Activated CD4-positive, alpha-beta T cell treated with anti-CD3 and anti-CD28 coated beads, Interleukin-2, amount 10 ng/mL, durations not matched to agents 24 days and 14 days (primary cell): ENCODE measurements at regions of chr12 and their contacts with region 1.

Region 1: DNA sequence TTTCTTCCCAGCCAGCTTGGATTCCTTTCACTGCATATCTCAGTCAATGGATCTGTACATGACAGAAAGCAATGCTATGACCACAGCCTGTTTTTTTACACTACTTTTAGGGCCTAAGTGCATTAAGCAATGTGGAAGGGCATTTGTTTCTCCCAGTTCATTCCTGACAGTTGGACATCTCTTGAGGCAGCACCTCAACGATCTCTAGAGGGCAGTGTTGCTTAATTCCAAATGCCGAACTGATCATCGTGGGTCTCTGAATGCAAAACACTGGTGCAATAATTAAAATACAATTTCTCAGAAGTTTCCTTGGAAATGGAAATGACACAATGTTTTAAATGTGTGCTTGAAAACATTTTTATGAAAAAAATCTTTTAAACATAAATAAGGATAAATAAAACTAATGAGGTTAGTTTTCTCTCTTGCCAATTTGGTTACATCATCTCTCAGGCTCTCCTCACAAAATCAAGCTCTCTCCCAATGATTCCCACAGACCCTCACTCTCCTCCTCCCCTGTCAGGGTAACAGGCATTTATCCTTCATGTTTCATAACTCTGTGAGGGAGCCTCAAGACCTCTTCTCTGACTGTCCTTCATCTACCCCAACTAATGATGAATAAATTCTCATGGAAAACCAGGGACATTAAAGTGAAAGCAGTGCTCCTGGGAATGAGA is 192.4 kb upstream of the SLC16A7 start:
- DNase-seq: peak; percentile 80
- H3K4me3 Mint-ChIP-seq: no peak overlapping the region
- H3K27ac Mint-ChIP-seq: no peak overlapping the region
- H3K4me1 Mint-ChIP-seq: peaks cover 9% of the 10 kb centered on the region
- H3K27me3 Mint-ChIP-seq: peaks cover 3% of the 10 kb centered on the region

Region 2: DNA sequence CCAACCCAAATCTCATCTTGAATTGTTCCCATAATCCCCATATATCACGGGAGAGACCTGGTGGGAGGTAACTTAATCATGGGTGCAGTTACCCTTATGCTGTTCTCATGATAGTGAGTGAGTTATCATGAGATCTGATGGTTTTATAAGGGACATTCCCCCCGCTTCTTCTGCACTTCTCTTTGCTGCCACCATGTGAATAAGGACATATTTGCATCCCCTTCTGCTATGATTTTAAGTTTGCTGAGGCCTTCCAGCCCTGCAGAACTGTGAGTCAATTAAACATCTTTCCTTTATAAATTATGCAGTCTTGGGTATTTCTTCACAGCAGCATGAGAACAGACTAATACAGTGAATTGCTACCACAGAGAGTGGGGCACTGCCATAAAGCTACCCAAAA is 662.2 kb before region 1 on chr12:
- intact Hi-C with region 1: no loop called
- DNase-seq: no peak
- H3K4me3 Mint-ChIP-seq: no peak overlapping the region
- H3K27ac Mint-ChIP-seq: no peak overlapping the region
- H3K4me1 Mint-ChIP-seq: no peaks in the 10 kb centered on the region
- H3K27me3 Mint-ChIP-seq: no peaks in the 10 kb centered on the region

Region 3: GRCh38 chr12:59317598-59317997 is 85.8 kb before region 1 on chr12:
- intact Hi-C with region 1: no loop called
- DNase-seq: no peak
- H3K4me3 Mint-ChIP-seq: no peak overlapping the region
- H3K27ac Mint-ChIP-seq: no peak overlapping the region
- H3K4me1 Mint-ChIP-seq: no peaks in the 10 kb centered on the region
- H3K27me3 Mint-ChIP-seq: no peaks in the 10 kb centered on the region

Region 4: GRCh38 chr12:59499774-59500173 is 96.4 kb after region 1 on chr12:
- intact Hi-C with region 1: no loop called
- DNase-seq: no peak
- H3K4me3 Mint-ChIP-seq: no peak overlapping the region
- H3K27ac Mint-ChIP-seq: no peak overlapping the region
- H3K4me1 Mint-ChIP-seq: peaks cover 5% of the 10 kb centered on the region
- H3K27me3 Mint-ChIP-seq: no peaks in the 10 kb centered on the region

Region 5: GRCh38 chr12:59548930-59549329 is 145.5 kb after region 1 on chr12:
- intact Hi-C with region 1: no loop called
- DNase-seq: peak; percentile 66
- H3K4me3 Mint-ChIP-seq: no peak overlapping the region
- H3K27ac Mint-ChIP-seq: no peak overlapping the region
- H3K4me1 Mint-ChIP-seq: peaks cover 3% of the 10 kb centered on the region
- H3K27me3 Mint-ChIP-seq: peaks cover 2% of the 10 kb centered on the region

Region 6: DNA sequence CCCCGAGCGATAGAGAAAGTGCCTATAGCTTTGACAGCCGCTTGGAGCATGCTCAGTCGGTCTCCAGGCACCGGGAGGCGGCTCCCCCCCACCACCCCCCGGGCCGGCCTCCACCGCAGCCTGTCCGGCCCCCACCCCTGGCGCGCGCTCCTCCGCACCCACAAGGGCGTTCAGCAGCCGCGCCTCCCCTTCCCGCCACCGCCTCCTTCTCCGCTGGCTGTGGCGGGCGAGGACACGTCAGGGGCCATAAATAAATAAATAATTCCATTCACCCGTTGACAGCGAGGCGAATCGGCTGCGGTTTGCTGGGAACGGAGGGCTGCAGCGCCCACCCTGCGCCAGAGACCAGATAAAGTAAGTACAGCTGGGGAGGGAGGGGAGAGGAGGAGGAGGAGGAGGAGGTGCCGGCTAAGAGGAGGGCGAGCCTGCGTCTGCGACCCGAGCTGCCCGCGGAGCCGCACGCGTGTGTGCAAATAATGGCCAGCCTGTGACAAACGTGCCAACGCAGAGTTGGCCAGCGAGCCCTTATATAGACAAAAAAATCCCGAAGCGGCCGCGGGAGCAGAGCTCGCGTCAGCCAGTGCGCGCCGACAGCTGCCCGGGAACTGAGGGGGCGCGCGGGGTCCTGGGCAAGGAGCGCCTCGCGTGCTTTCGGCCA is 192.6 kb after region 1 on chr12 and contains the start of gene SLC16A7:
- intact Hi-C with region 1: loop called (anchors 2 kb)
- DNase-seq: peak; percentile 93
- H3K4me3 Mint-ChIP-seq: peak within 1 kb of the TSS; percentile 88
- H3K27ac Mint-ChIP-seq: peak within 1 kb of the TSS; percentile 100
- H3K4me1 Mint-ChIP-seq: peaks cover 42% of the 10 kb centered on the region
- H3K27me3 Mint-ChIP-seq: no peaks in the 10 kb centered on the region
- total RNA-seq, gene SLC16A7: 43.7 and 44.2 TPM in 2 replicates

Region 7: DNA sequence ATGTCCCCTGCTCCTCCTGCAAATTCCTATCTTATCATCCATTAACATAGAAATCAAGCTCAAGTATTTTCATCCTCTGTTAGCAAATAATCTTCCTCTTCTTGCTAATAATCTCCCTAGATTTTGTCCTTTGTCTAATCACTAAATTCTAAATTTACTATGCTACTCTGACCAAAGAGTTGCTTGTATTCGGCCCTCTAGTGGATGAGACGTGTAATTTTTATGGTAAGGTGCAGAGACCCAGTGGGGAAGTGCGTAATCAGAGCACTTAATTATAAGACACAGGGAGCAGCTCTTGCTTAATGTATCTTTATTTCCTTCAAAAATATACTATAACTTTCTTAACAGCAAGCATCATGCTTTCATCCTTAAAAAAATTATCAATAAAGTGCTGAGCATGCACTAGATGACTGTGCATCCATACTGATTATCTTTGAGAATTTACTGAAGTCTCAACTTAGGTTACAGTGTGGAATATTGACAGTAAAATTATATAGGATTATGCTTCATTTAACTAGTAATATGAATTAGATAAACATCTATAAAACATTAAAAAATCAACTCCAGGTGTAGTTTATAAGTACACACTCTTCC is 405.0 kb after region 1 on chr12:
- intact Hi-C with region 1: loop called (anchors 1 kb)
- DNase-seq: peak; percentile 66
- H3K4me3 Mint-ChIP-seq: no peak overlapping the region
- H3K27ac Mint-ChIP-seq: no peak overlapping the region
- H3K4me1 Mint-ChIP-seq: no peaks in the 10 kb centered on the region
- H3K27me3 Mint-ChIP-seq: peaks cover 6% of the 10 kb centered on the region

Region 8: DNA sequence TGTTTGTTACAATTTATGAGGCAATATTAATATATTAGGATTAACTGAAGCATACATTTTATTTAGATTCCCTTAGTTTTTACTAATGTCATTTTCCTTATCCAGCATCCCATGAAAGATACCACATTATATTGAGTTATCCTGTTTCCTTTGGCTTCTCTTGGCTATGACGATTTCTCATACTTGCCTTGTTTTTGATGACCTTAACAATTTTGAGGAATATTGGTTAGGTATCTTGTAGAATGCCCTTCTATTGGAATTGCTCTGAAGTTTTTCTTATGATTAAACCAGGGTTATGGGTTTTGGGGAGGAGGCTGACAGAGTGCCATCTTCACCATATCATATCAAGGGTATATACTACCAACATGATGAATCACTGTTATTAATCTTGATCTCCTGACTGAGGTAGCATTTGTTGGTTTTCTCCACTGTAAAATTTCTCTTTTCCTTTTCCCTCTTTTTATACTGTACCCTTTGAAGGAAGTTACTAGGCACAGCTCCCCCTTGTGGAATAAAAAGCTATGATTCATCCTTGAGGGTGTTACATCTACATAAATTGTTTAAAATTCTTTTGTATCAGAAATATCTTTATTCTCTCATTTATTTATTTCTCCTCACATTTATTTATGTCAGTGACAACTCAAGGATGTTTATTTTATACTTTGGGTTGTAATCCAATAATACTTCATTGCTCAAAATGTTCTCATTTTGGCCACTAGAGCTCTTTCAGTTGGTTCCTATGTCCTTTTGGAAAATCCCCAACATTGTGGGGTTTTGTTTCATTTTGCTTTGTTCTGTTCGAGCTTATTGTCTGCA is 431.5 kb after region 1 on chr12:
- intact Hi-C with region 1: loop called (anchors 1 kb)
- DNase-seq: peak; percentile 61
- H3K4me3 Mint-ChIP-seq: no peak overlapping the region
- H3K27ac Mint-ChIP-seq: no peak overlapping the region
- H3K4me1 Mint-ChIP-seq: no peaks in the 10 kb centered on the region
- H3K27me3 Mint-ChIP-seq: peaks cover 2% of the 10 kb centered on the region

Region 9: DNA sequence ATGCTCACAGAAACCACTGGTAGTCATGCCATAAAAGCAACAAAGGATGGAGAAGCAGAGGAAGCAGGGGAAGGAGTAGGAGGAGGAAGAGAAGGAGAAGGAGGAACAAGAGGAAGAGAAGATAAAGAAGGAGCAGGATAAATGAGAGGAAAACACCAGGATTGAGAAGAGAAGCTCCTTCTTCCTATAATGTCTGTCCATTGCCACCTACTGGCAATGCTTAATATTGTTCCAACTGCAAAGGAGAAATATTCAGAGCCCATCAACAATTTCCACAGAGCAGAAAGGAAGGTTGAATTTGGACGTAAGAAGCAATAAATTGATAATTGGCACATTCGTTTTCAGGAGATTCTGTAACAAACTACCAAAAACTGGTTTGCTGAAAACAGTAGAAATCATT is 1090.8 kb after region 1 on chr12:
- intact Hi-C with region 1: loop called (anchors 10 kb)
- DNase-seq: no peak
- H3K4me3 Mint-ChIP-seq: no peak overlapping the region
- H3K27ac Mint-ChIP-seq: no peak overlapping the region
- H3K4me1 Mint-ChIP-seq: no peaks in the 10 kb centered on the region
- H3K27me3 Mint-ChIP-seq: no peaks in the 10 kb centered on the region